ENCODE measurements at regions of chr10 and their contacts with region 1.

Region 1: DNA sequence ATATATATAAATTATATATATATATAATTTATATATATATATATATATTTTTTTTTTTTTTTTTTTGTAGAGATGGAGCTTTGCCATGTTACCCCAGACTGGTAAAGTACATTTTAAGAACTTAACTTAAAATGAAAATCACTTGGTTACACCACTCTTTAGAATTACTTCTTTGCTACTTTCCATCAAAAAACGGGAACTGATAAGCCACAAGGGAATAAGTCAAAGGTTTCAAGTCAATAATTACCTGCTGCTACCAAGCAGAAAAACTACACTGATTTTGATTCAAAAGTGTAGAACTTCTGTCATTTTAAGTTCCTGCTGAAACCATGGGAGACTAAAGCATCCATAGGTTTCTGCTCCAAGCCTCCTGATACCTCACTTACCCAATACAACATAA is 12.2 kb downstream of the PPA1 start:
- DNase-seq: no peak
- ATAC-seq: peak; percentile 41
- H3K4me3 ChIP-seq: peak overlapping the region; percentile 14; the same call in 1 of the 2 replicates
- H3K27ac ChIP-seq: peak overlapping the region; percentile 52; the same call in 1 of the 2 replicates
- H3K4me1 ChIP-seq: peaks cover 21% of the 10 kb centered on the region
- H3K27me3 ChIP-seq: no peaks in the 10 kb centered on the region
- CTCF ChIP-seq: no peak
- EP300 ChIP-seq: no peak
- POLR2A ChIP-seq: no peak
- RAD21 ChIP-seq: no peak

Region 2: GRCh38 chr10:69800109-69800508 is 420.9 kb before region 1 on chr10:
- CTCF ChIA-PET with region 1: no interaction called
- POLR2A ChIA-PET with region 1: no interaction called
- RAD21 ChIA-PET with region 1: no interaction called
- SMC1A ChIA-PET with region 1: no interaction called
- in situ Hi-C with region 1: no loop called
- intact Hi-C with region 1: no loop called
- DNase-seq: no peak
- ATAC-seq: peak; percentile 60
- H3K4me3 ChIP-seq: no peak overlapping the region
- H3K27ac ChIP-seq: no peak overlapping the region
- H3K4me1 ChIP-seq: no peaks in the 10 kb centered on the region
- H3K27me3 ChIP-seq: peaks cover 9 to 18% of the 10 kb centered on the region in 2 experiments
- CTCF ChIP-seq: peak; percentile 53 to 58 (median 56); a peak in 5 of 6 replicates
- EP300 ChIP-seq: no peak
- POLR2A ChIP-seq: no peak
- RAD21 ChIP-seq: peak; percentile 43

Region 3: DNA sequence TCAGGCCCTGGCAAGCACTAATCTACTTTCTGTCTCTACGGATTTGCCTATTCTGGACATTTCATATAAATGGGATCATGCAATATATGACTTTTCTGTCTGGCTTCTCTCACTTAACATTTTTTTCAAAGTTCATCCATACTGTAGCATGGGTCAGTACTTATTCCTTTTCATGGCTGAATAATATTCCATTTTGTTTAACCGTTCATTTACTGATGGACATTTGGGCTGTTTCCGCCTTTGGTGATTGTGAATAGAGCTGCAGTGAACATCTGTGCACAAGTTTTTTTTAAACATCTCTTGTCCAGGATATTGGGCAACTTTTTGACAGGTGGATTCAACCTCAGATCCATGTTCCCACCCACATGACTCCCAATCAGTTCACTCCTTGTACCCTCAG is 119.4 kb before region 1 on chr10:
- CTCF ChIA-PET with region 1: no interaction called
- POLR2A ChIA-PET with region 1: no interaction called
- RAD21 ChIA-PET with region 1: no interaction called
- SMC1A ChIA-PET with region 1: no interaction called
- in situ Hi-C with region 1: no loop called
- intact Hi-C with region 1: no loop called
- DNase-seq: no peak
- ATAC-seq: no peak
- H3K4me3 ChIP-seq: no peak overlapping the region
- H3K27ac ChIP-seq: no peak overlapping the region
- H3K4me1 ChIP-seq: no peaks in the 10 kb centered on the region
- H3K27me3 ChIP-seq: no peaks in the 10 kb centered on the region
- CTCF ChIP-seq: no peak
- EP300 ChIP-seq: no peak
- POLR2A ChIP-seq: no peak
- RAD21 ChIP-seq: no peak

Region 4: DNA sequence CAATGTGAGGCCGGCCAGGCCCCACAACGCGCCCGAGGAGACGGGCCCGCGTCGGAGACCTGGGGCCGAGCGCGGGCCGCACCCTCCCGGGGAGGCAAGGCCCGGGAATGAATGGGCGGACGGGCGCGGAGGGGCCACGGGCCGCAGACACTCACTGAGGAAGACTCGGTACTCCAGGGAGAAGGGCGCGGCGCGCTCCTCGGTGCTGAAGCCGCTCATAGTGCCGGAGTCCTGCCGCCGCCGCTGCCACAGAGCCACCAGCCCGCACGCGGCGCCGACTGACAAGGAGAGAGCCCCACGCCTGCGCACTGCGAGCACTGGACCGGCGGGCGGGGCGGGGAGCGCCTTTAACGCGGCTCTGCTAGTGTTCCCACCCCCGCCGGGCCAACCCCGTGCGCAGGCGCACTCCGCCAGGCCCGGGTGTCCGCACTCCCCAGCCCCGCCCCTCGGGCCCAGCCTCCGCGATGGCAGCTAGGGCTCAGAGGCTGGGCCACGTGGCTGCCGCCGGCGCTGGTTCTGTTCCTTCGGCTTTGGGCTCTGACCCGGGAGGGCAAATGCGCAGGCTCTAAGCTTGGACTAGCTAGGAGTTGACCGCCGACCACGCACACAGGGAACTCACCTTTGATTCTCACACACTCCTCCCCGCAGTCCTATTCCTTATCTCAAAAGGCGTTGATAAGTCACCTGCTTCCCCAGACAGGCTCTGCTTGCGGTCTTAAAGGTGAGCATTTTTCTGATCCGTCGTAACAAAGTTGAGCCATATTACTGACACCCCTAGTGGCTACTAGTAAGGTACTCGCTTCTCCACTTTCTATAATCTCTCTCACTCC is 12.3 kb after region 1 on chr10 and contains the start of gene PPA1:
- CTCF ChIA-PET with region 1: interaction called, 56 read pairs
- POLR2A ChIA-PET with region 1: interaction called, 11 read pairs
- RAD21 ChIA-PET with region 1: interaction called, 44 read pairs
- SMC1A ChIA-PET with region 1: interaction called, 48 read pairs
- in situ Hi-C with region 1: no loop called
- intact Hi-C with region 1: no loop called
- DNase-seq: peak; percentile 80
- ATAC-seq: peak; percentile 92
- H3K4me3 ChIP-seq: peak within 1 kb of the TSS; percentile 93
- H3K27ac ChIP-seq: peak within 1 kb of the TSS; percentile 76
- H3K4me1 ChIP-seq: no peaks in the 10 kb centered on the region
- H3K27me3 ChIP-seq: no peaks in the 10 kb centered on the region
- CTCF ChIP-seq: peak in 2 of 3 experiments; percentile 20 to 31; a peak in 3 of 6 replicates
- EP300 ChIP-seq: no peak
- POLR2A ChIP-seq: peak; percentile 95
- RAD21 ChIP-seq: no peak
- polyA plus RNA-seq, gene PPA1: 224 to 386 TPM

Region 5: DNA sequence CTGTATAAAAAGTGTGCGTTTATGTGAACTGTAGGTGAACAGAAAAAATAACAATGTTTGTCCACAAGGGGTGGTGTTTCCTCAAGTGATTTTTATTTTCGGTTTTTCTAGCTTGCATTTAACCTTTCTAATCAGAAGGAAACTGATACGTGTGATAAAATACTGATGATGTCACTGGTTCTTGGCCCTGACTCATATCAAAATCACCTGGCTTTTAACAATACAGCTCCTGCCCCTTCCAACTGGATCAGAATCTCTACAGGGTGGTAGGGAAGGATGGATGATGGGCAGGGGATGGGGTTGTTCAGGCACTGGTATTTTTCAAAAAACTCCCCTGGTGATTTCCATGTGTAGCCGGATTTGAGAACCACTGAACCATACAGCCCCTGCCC is 51.9 kb after region 1 on chr10:
- CTCF ChIA-PET with region 1: interaction called, 133 read pairs
- POLR2A ChIA-PET with region 1: interaction called, 5 read pairs
- RAD21 ChIA-PET with region 1: interaction called, 65 read pairs
- SMC1A ChIA-PET with region 1: interaction called, 32 read pairs
- in situ Hi-C with region 1: no loop called
- intact Hi-C with region 1: loop called (anchors 2 kb)
- DNase-seq: peak; percentile 74
- ATAC-seq: peak; percentile 85
- H3K4me3 ChIP-seq: no peak overlapping the region
- H3K27ac ChIP-seq: peak overlapping the region; percentile 40
- H3K4me1 ChIP-seq: peaks cover 31% of the 10 kb centered on the region
- H3K27me3 ChIP-seq: no peaks in the 10 kb centered on the region
- CTCF ChIP-seq: peak; percentile 35 to 75 (median 51); a peak in 5 of 6 replicates
- EP300 ChIP-seq: peak; percentile 40 to 42; a peak in 2 of 4 replicates
- POLR2A ChIP-seq: no peak
- RAD21 ChIP-seq: peak; percentile 45

Region 6: GRCh38 chr10:70324339-70324861 is 103.4 kb after region 1 on chr10:
- CTCF ChIA-PET with region 1: interaction called, 14 read pairs
- POLR2A ChIA-PET with region 1: interaction called, 4 read pairs
- RAD21 ChIA-PET with region 1: interaction called, 17 read pairs
- SMC1A ChIA-PET with region 1: interaction called, 7 read pairs
- in situ Hi-C with region 1: no loop called
- intact Hi-C with region 1: no loop called
- DNase-seq: no peak
- ATAC-seq: peak; percentile 89
- H3K4me3 ChIP-seq: no peak overlapping the region
- H3K27ac ChIP-seq: 0 out of 2 replicates have a peak overlapping the region, but pooled peaks have one; percentile 33
- H3K4me1 ChIP-seq: peaks cover 23% of the 10 kb centered on the region
- H3K27me3 ChIP-seq: no peaks in the 10 kb centered on the region
- CTCF ChIP-seq: no peak
- EP300 ChIP-seq: no peak
- POLR2A ChIP-seq: no peak
- RAD21 ChIP-seq: no peak

Region 7: DNA sequence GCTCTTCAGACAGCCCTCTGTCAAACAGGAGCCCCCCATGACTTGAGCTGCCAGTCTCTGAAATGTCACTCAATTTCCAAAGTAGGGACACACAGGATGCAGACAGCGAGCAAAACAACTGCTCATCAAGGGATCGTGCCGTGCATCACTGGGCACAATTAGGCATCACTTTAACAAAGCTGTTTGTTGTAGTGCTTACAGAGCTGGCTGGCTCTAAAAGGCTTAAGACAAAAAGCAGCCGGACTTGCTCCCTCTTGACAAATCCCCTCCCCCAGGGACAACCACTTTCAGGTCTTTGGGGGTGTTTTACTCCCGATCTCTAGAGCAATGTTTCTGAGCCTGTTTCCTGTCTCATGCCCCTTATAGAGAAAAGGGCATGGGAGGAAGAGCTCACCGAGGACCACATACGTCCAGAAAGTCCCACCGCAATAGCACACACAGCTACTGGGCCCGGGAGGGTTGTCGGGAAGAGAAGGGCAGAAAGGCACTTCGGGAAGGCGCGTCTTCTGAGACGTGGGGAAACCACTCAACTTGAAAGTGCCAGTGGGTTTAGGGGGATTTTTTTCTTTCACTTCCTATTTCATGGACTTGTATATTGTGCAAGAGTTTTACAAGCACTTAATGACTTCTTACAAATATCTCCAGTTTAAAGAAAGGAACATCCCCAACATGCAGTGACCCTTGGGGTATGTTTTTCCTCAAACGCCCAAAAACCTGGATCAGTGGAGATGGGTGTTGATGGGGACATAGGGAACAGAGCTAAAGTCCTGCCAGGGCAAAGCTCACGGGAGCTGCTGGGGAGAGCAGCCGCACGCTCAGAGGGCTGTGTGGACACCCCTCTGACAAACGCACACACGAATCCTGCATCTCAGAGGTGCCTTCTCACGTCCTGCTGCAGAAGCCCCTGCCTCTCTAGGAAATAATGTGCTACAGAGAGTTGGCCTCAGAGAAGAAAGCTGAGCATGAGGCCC is 134.3 kb after region 1 on chr10:
- CTCF ChIA-PET with region 1: interaction called, 611 read pairs
- POLR2A ChIA-PET with region 1: interaction called, 5 read pairs
- RAD21 ChIA-PET with region 1: interaction called, 675 read pairs
- SMC1A ChIA-PET with region 1: interaction called, 408 read pairs
- in situ Hi-C with region 1: loop called (anchors 5 kb)
- intact Hi-C with region 1: no loop called
- DNase-seq: peak; percentile 94
- ATAC-seq: peak; percentile 79
- H3K4me3 ChIP-seq: peak overlapping the region; percentile 36
- H3K27ac ChIP-seq: peak overlapping the region; percentile 88
- H3K4me1 ChIP-seq: peaks cover 51% of the 10 kb centered on the region
- H3K27me3 ChIP-seq: no peaks in the 10 kb centered on the region
- CTCF ChIP-seq: no peak
- EP300 ChIP-seq: peak; percentile 52 to 98
- POLR2A ChIP-seq: peak; percentile 46
- RAD21 ChIP-seq: no peak

Region 8: GRCh38 chr10:70404036-70404786 is 183.2 kb after region 1 on chr10 and contains the start of gene EIF4EBP2:
- CTCF ChIA-PET with region 1: interaction called, 9 read pairs
- POLR2A ChIA-PET with region 1: interaction called, 5 read pairs
- RAD21 ChIA-PET with region 1: interaction called, 12 read pairs
- SMC1A ChIA-PET with region 1: interaction called, 20 read pairs
- in situ Hi-C with region 1: no loop called
- intact Hi-C with region 1: no loop called
- DNase-seq: peak; percentile 89
- ATAC-seq: peak; percentile 91
- H3K4me3 ChIP-seq: peak within 1 kb of the TSS; percentile 79
- H3K27ac ChIP-seq: peak within 1 kb of the TSS; percentile 73
- H3K4me1 ChIP-seq: peaks cover 14% of the 10 kb centered on the region
- H3K27me3 ChIP-seq: no peaks in the 10 kb centered on the region
- CTCF ChIP-seq: no peak
- EP300 ChIP-seq: no peak
- POLR2A ChIP-seq: peak; percentile 96
- RAD21 ChIP-seq: no peak
- polyA plus RNA-seq, gene EIF4EBP2: 14.4 to 20.4 TPM

Measured in GM12878 (cell line).